WTC11 (cell line): ENCODE measurements at regions of chr7 and their contacts with region 1.

Region 1: GRCh38 chr7:158404031-158404761 is 183.4 kb downstream of the PTPRN2 start:
- DNase-seq: no peak
- ATAC-seq: no peak
- H3K4me3 Mint-ChIP-seq: no peak overlapping the region
- H3K27ac Mint-ChIP-seq: peak overlapping the region; percentile 73; the same call in 1 of the 2 replicates
- H3K4me1 Mint-ChIP-seq: peaks cover 11% of the 10 kb centered on the region
- H3K27me3 Mint-ChIP-seq: no peaks in the 10 kb centered on the region
- CTCF ChIP-seq: no peak

Region 2: DNA sequence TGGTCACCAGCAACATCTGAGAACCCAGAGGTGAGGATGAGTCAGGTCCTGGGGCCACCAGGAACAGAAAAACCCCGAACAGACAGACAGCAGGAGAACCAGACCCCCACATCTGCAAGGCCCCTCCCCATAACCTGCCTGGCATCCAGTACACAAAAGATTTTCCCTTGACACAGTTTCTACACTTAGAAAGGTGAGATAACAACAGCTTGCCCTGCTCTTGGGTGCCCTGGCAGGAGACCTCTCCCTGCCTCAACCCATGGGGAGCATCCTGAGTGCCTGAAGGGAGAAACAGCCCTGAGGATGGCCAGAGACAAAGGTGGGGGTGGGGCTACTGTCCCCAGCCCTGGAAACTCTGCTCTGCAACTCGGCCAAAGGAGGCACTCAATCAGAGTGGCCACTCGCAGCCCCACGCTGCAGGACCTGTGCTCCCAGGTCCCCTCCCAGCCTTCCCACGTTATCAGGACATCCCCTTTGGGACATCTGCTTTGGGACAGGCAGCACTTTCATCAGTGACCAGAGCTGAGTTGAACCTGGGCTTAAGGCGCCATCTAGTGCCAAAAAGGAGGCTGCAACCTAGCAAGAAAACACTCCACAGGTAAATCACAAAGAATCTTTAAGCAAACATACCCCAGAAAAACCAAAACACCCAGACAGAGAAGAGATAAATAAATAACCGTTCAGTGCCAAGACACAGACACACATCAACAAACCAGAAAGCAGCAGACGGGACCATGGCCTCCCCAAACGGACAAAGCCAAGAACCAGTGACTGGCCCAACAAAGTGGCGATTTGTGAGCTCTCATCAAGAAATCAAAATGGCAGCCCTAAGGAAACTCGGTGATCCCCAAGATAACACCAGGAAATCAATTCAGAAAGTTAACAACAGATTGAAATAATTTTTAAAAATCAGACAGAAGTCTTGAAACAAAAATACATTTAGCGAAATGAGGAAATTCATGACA is 50.3 kb before region 1 on chr7:
- CTCF ChIA-PET with region 1: interaction called, 14 read pairs
- POLR2A ChIA-PET with region 1: no interaction called
- DNase-seq: peak; percentile 64
- ATAC-seq: peak; percentile 50
- H3K4me3 Mint-ChIP-seq: no peak overlapping the region
- H3K27ac Mint-ChIP-seq: no peak overlapping the region
- H3K4me1 Mint-ChIP-seq: peaks cover 32% of the 10 kb centered on the region
- H3K27me3 Mint-ChIP-seq: peaks cover 50% of the 10 kb centered on the region
- CTCF ChIP-seq: peak; percentile 69

Region 3: DNA sequence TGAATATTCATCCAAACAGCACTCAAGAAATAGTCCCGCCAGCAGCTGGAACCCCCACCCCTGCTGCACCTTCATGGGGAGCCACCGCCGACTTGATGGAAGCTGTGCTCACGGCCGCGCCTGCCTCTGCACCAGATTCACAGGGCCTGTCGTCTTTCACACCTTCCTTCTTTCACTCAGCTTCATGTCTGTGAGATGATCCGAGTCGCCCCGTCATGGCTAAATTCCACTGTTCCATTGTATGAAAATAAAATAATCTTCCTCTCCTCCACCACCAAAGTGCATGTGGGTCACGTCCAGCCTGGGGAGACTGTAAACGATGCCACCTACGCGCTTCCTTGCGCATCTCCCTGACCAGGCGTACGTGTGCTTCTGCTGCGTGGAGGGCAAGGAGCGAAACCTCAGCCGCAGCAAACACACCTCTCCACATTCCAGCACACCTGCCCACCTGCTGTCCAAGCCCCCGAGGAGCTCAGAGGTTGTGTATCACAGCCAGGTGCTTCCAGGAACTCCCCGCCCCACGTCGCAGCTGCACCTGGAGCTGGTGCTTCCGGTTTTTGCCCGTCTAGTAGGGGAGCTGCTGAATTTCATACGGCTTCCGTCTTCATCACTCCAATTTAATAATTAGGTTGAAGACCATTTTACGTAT is 46.4 kb after region 1 on chr7:
- CTCF ChIA-PET with region 1: no interaction called
- POLR2A ChIA-PET with region 1: no interaction called
- DNase-seq: no peak
- ATAC-seq: peak; percentile 72
- H3K4me3 Mint-ChIP-seq: no peak overlapping the region
- H3K27ac Mint-ChIP-seq: peak overlapping the region; percentile 46; the same call in 1 of the 2 replicates
- H3K4me1 Mint-ChIP-seq: peaks cover 19% of the 10 kb centered on the region
- H3K27me3 Mint-ChIP-seq: no peaks in the 10 kb centered on the region
- CTCF ChIP-seq: no peak

Region 4: DNA sequence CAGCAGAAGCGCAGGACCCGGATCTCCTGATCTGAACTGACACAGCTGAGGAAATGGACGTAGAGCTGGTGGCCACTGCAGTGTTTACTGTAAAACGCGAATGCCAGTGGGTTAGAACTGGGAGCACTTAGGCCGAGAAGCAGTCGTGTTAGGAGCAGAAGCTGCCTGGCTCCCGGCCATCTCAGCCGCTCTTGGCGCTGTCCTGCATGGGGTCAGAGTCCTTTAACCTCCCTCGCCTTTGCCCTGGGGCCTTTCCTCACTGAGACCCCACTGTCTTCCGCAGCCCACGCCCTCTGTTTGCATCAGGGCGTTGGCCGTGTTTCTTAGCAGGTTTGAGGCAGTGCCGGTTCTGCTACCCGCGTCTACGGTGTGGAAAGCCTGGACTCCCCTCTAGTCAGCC is 476.8 kb after region 1 on chr7:
- CTCF ChIA-PET with region 1: no interaction called
- POLR2A ChIA-PET with region 1: no interaction called
- DNase-seq: no peak
- ATAC-seq: no peak
- H3K4me3 Mint-ChIP-seq: no peak overlapping the region
- H3K27ac Mint-ChIP-seq: no peak overlapping the region; the same call in 1 of the 2 replicates
- H3K4me1 Mint-ChIP-seq: no peaks in the 10 kb centered on the region
- H3K27me3 Mint-ChIP-seq: no peaks in the 10 kb centered on the region
- CTCF ChIP-seq: no peak